MCF 10A (cell line): ENCODE measurements at regions of chr13 and their contacts with region 1.

Region 1: GRCh38 chr13:36275190-36276002 is 22.2 kb downstream of the CCDC169 start:
- DNase-seq: peak; percentile 61
- H3K4me3 Mint-ChIP-seq: no peak overlapping the region
- H3K27ac Mint-ChIP-seq: no peak overlapping the region
- H3K4me1 Mint-ChIP-seq: no peaks in the 10 kb centered on the region
- H3K27me3 Mint-ChIP-seq: no peaks in the 10 kb centered on the region
- CTCF ChIP-seq: peak; percentile 68

Region 2: DNA sequence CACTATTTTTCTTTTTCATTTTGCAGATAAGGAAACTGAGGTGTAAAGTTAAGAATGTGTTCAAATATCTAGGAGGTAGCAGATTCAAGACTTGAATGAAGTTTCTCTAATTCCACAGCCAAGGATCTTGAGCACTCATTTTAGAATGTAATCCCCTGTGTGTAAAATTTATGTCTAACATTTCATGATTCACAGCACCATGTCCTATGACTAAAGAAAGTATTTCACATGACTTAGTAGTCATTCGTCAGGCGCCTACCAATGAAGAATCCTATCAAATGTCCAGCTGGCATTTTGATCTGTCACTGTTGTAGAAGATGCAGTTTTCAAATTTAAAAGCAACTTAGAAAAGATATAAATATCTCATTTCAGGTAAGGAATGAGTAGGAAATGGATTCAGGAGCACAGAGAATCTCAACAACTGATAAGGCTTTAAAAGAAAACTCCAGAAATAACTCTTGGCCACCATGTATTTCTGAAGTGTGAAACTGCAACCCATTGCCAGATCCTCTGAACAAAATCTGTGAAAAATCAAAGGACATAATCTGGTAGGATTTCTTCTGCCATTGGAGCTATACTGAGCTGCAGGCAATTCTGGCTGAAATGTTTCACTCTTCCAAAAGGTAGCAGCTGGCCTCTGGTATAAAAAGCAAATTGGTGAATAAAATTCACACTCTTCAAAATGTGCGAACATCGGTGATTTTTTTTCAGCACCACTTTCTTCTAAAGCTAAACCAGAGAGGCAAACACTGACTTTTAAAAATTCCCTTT is 236.4 kb before region 1 on chr13:
- CTCF ChIA-PET with region 1: no interaction called
- POLR2A ChIA-PET with region 1: no interaction called
- intact Hi-C with region 1: no loop called
- DNase-seq: no peak
- H3K4me3 Mint-ChIP-seq: no peak overlapping the region
- H3K27ac Mint-ChIP-seq: no peak overlapping the region
- H3K4me1 Mint-ChIP-seq: no peaks in the 10 kb centered on the region
- H3K27me3 Mint-ChIP-seq: no peaks in the 10 kb centered on the region
- CTCF ChIP-seq: no peak

Region 3: DNA sequence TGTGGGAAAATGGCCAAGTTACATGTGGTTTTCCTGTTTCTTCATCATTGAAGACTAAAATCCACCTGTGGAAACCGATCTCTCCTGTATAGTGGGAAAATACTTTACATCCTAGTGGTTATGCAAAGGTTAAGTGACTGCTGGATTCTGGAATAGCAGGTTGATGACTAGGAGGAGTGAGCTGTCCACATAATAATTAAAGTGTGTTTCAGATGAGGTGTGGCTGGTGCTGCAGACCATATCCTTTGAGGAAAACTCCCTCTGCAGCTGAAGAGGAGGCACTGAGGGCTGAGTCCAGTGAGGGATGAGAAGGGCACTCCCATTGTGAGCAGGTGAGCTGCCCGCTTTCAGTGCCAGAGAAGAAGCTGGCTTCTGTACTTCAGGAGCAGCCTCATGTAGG is 187.4 kb before region 1 on chr13:
- CTCF ChIA-PET with region 1: interaction called, 3 read pairs
- POLR2A ChIA-PET with region 1: no interaction called
- intact Hi-C with region 1: loop called (anchors 10 kb)
- DNase-seq: peak; percentile 21
- H3K4me3 Mint-ChIP-seq: no peak overlapping the region
- H3K27ac Mint-ChIP-seq: no peak overlapping the region
- H3K4me1 Mint-ChIP-seq: peaks cover 6% of the 10 kb centered on the region
- H3K27me3 Mint-ChIP-seq: no peaks in the 10 kb centered on the region
- CTCF ChIP-seq: no peak

Region 4: DNA sequence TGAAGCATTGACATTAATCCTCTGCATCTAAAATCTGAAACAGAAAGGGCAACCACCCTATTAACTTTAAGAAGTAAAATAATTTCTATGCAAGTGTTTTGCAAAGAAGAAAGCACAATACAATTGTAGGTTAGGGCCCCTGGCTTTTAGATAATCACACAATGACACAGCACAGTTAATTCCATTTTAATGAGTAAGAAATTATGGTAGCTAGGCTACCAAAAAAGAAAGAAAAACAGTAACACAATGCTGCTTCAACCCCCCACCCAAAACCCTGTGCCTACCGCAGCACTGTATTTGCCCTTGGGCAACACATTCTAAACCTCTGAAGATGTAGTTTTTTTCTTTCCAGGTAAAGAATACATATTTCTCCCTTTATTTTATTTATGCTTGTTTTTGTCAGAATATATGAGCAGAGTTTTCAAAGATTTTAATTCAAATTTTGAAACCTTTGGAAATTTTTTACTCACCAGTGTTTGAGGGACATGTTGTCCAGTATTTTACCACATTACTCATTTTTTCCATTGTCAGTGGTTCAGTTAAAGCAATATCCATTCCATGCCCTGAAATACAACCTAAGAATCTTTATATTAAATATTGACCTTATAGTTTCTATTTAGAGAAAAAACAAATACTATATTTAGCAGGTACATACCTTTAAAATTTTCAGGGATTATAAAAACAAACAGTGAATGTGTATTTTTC is 82.1 kb before region 1 on chr13:
- CTCF ChIA-PET with region 1: interaction called, 3 read pairs
- POLR2A ChIA-PET with region 1: interaction called, 5 read pairs
- intact Hi-C with region 1: loop called (anchors 5 kb)
- DNase-seq: peak; percentile 64
- H3K4me3 Mint-ChIP-seq: no peak overlapping the region
- H3K27ac Mint-ChIP-seq: peak overlapping the region; percentile 80
- H3K4me1 Mint-ChIP-seq: peaks cover 8% of the 10 kb centered on the region
- H3K27me3 Mint-ChIP-seq: no peaks in the 10 kb centered on the region
- CTCF ChIP-seq: no peak

Region 5: GRCh38 chr13:36251526-36251925 is 23.9 kb before region 1 on chr13:
- CTCF ChIA-PET with region 1: interaction called, 10 read pairs
- POLR2A ChIA-PET with region 1: interaction called, 3 read pairs
- intact Hi-C with region 1: no loop called
- DNase-seq: no peak
- H3K4me3 Mint-ChIP-seq: no peak overlapping the region
- H3K27ac Mint-ChIP-seq: no peak overlapping the region
- H3K4me1 Mint-ChIP-seq: no peaks in the 10 kb centered on the region
- H3K27me3 Mint-ChIP-seq: no peaks in the 10 kb centered on the region
- CTCF ChIP-seq: no peak

Region 6: GRCh38 chr13:36261976-36262375 is 13.4 kb before region 1 on chr13:
- CTCF ChIA-PET with region 1: interaction called, 13 read pairs
- POLR2A ChIA-PET with region 1: interaction called, 4 read pairs
- intact Hi-C with region 1: no loop called
- DNase-seq: peak; percentile 3
- H3K4me3 Mint-ChIP-seq: no peak overlapping the region
- H3K27ac Mint-ChIP-seq: peak overlapping the region; percentile 61
- H3K4me1 Mint-ChIP-seq: peaks cover 11% of the 10 kb centered on the region
- H3K27me3 Mint-ChIP-seq: no peaks in the 10 kb centered on the region
- CTCF ChIP-seq: no peak